ENCODE measurements at regions of chr1 and their contacts with region 1.

Region 1: GRCh38 chr1:201703621-201704439 is 125.1 kb upstream of the IPO9 start:
- DNase-seq: peak; percentile 91
- H3K27ac ChIP-seq: peak overlapping the region; percentile 90
- CTCF ChIP-seq: peak; percentile 96

Region 2: GRCh38 chr1:201565024-201565730 is 138.7 kb before region 1 on chr1:
- CTCF ChIA-PET with region 1: interaction called, 84 read pairs
- POLR2A ChIA-PET with region 1: no interaction called
- DNase-seq: no peak
- H3K27ac ChIP-seq: peak overlapping the region; percentile 10; the same call in 1 of the 2 replicates
- CTCF ChIP-seq: no peak

Region 3: GRCh38 chr1:201649761-201650622 is 53.8 kb before region 1 on chr1:
- CTCF ChIA-PET with region 1: interaction called, 10 read pairs
- POLR2A ChIA-PET with region 1: no interaction called
- DNase-seq: peak; percentile 87
- H3K27ac ChIP-seq: peak overlapping the region; percentile 97
- CTCF ChIP-seq: no peak

Region 4: GRCh38 chr1:201739492-201740085 is 35.8 kb after region 1 on chr1:
- CTCF ChIA-PET with region 1: no interaction called
- POLR2A ChIA-PET with region 1: no interaction called
- DNase-seq: peak; percentile 79
- H3K27ac ChIP-seq: peak overlapping the region; percentile 76
- CTCF ChIP-seq: no peak